MCF 10A (cell line): ENCODE measurements at regions of chr9 and their contacts with region 1.

Region 1: GRCh38 chr9:100598641-100599145 is 20.8 kb downstream of the CAVIN4 start:
- DNase-seq: peak; percentile 73
- H3K4me3 Mint-ChIP-seq: peak overlapping the region; percentile 69
- H3K27ac Mint-ChIP-seq: no peak overlapping the region
- H3K4me1 Mint-ChIP-seq: peaks cover 16% of the 10 kb centered on the region
- H3K27me3 Mint-ChIP-seq: peaks cover 14% of the 10 kb centered on the region
- CTCF ChIP-seq: no peak

Region 2: GRCh38 chr9:99184475-99185347 is 1414.0 kb before region 1 on chr9:
- CTCF ChIA-PET with region 1: interaction called, 7 read pairs
- POLR2A ChIA-PET with region 1: no interaction called
- intact Hi-C with region 1: loop called (anchors 5 kb)
- DNase-seq: peak; percentile 87
- H3K4me3 Mint-ChIP-seq: no peak overlapping the region
- H3K27ac Mint-ChIP-seq: no peak overlapping the region
- H3K4me1 Mint-ChIP-seq: no peaks in the 10 kb centered on the region
- H3K27me3 Mint-ChIP-seq: peaks cover 34% of the 10 kb centered on the region
- CTCF ChIP-seq: peak; percentile 91

Region 3: GRCh38 chr9:100426530-100427428 is 171.9 kb before region 1 on chr9 and contains the start of gene MSANTD3:
- CTCF ChIA-PET with region 1: interaction called, 5 read pairs
- POLR2A ChIA-PET with region 1: no interaction called
- intact Hi-C with region 1: loop called (anchors 5 kb)
- DNase-seq: peak; percentile 67
- H3K4me3 Mint-ChIP-seq: peak within 1 kb of the TSS; percentile 97
- H3K27ac Mint-ChIP-seq: peak within 1 kb of the TSS; percentile 98
- H3K4me1 Mint-ChIP-seq: peaks cover 45% of the 10 kb centered on the region
- H3K27me3 Mint-ChIP-seq: no peaks in the 10 kb centered on the region
- CTCF ChIP-seq: no peak
- total RNA-seq, gene MSANTD3: 41.3 and 56.3 TPM in 2 replicates

Region 4: GRCh38 chr9:100511205-100511604 is 87.5 kb before region 1 on chr9:
- CTCF ChIA-PET with region 1: no interaction called
- POLR2A ChIA-PET with region 1: no interaction called
- intact Hi-C with region 1: no loop called
- DNase-seq: no peak
- H3K4me3 Mint-ChIP-seq: no peak overlapping the region
- H3K27ac Mint-ChIP-seq: no peak overlapping the region
- H3K4me1 Mint-ChIP-seq: no peaks in the 10 kb centered on the region
- H3K27me3 Mint-ChIP-seq: no peaks in the 10 kb centered on the region
- CTCF ChIP-seq: no peak

Region 5: GRCh38 chr9:100619665-100620064 is 21.0 kb after region 1 on chr9:
- CTCF ChIA-PET with region 1: interaction called, 27 read pairs
- POLR2A ChIA-PET with region 1: no interaction called
- intact Hi-C with region 1: no loop called
- DNase-seq: no peak
- H3K4me3 Mint-ChIP-seq: no peak overlapping the region
- H3K27ac Mint-ChIP-seq: no peak overlapping the region
- H3K4me1 Mint-ChIP-seq: no peaks in the 10 kb centered on the region
- H3K27me3 Mint-ChIP-seq: peaks cover 16% of the 10 kb centered on the region
- CTCF ChIP-seq: no peak

Region 6: DNA sequence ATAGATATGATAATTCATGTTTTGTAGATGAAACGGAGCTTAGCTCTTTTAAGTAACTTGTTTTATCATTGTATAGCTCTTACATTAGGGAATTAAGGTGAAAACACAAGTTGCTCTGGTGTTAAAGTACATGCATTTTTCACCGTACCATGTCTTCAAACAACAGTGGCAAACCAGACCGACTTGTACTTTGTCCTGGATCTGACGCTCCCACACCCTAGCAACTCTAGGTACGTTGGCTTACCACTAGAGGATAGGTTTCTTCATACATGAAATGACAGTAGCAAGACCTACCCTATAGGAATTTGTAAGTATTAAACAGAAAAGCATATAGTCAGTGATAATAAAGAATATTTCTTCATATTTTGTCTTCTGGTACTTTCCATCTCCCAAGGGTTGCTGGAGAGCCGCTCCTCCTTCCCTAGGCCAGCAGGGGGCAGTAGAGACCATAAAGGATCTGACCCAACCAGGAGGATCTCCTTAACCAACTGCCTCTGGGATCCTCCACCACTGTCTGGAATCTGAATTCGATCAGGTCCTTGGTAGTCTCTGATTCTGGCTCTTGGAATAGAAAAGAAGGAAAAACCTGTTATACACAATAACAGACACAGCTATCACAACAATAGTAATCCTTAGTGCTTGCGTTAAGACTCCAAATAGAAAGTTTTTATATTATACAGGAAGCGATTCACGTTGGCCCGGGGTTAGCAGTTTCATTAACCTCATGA is 115.8 kb after region 1 on chr9:
- CTCF ChIA-PET with region 1: interaction called, 44 read pairs
- POLR2A ChIA-PET with region 1: no interaction called
- intact Hi-C with region 1: loop called (anchors 5 kb)
- DNase-seq: peak; percentile 77
- H3K4me3 Mint-ChIP-seq: no peak overlapping the region
- H3K27ac Mint-ChIP-seq: no peak overlapping the region
- H3K4me1 Mint-ChIP-seq: no peaks in the 10 kb centered on the region
- H3K27me3 Mint-ChIP-seq: peaks cover under 1% of the 10 kb centered on the region
- CTCF ChIP-seq: peak; percentile 89

Region 7: GRCh38 chr9:101311758-101312420 is 713.2 kb after region 1 on chr9:
- CTCF ChIA-PET with region 1: interaction called, 129 read pairs
- POLR2A ChIA-PET with region 1: interaction called, 9 read pairs
- intact Hi-C with region 1: loop called (anchors 1 kb)
- DNase-seq: peak; percentile 84
- H3K4me3 Mint-ChIP-seq: no peak overlapping the region
- H3K27ac Mint-ChIP-seq: no peak overlapping the region
- H3K4me1 Mint-ChIP-seq: peaks cover 7% of the 10 kb centered on the region
- H3K27me3 Mint-ChIP-seq: peaks cover 11% of the 10 kb centered on the region
- CTCF ChIP-seq: peak; percentile 54